CD4-positive, alpha-beta T cell (primary cell): ENCODE measurements at regions of chr10 and their contacts with region 1.

Region 1: GRCh38 chr10:6014241-6014761 is 37.0 kb upstream of the IL15RA start:
- DNase-seq: peak; percentile 32 to 92 (median 60)
- ATAC-seq: peak; percentile 100
- H3K4me3 ChIP-seq: no peak overlapping the region
- H3K4me3 Mint-ChIP-seq: no peak overlapping the region
- H3K27ac ChIP-seq: peak overlapping the region; percentile 68 to 89
- H3K27ac Mint-ChIP-seq: peak overlapping the region; percentile 90
- H3K4me1 ChIP-seq: peaks cover 17% of the 10 kb centered on the region
- H3K4me1 Mint-ChIP-seq: peaks cover 12% of the 10 kb centered on the region
- H3K27me3 ChIP-seq: no peaks in the 10 kb centered on the region
- H3K27me3 Mint-ChIP-seq: no peaks in the 10 kb centered on the region
- CTCF ChIP-seq: peak; percentile 89

Region 2: DNA sequence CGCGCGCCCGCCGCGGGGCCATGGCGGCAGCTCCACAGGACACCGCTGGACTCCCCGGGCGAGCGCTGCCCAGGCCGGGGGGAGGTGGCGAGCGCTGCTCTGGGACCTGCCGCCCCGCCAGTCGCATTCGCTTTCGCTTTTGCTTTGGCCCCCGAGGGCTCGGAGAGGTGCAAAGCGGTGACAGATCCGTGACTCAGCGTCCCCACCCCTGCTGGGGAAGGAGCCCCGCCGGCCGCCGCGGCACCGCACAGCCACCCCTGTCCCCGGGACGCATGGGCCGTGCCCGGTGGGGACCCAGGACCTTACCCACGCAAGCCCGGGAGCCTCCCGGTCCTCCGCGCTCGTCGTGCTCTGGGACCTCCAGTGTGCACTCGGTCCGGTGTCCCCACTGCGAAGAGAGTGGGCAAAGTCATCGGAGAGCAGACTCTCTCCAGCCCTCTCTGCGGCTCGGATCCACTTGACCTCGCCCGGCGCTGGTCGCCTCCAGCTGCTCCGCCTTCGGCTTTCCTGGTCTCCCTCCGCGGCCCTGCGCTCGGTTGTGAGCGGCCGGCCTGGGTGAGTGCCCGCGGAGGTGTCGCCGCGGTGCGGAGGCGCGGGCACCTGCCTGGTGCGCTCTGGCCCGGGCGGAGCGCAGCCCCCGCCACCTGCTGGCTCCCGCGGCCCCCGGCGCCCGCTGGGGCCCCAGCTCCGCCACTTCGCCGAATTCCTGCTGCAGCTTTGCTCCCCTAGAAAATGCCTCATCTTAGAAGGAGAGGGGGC is 36.7 kb before region 1 on chr10 and contains the start of gene IL15RA:
- CTCF ChIA-PET with region 1: interaction called, 3 read pairs
- POLR2A ChIA-PET with region 1: interaction called, 10 read pairs
- intact Hi-C with region 1: no loop called
- DNase-seq: peak; percentile 61 to 92 (median 76)
- ATAC-seq: peak; percentile 76
- H3K4me3 ChIP-seq: peak within 1 kb of the TSS; percentile 91
- H3K4me3 Mint-ChIP-seq: peak within 1 kb of the TSS; percentile 97
- H3K27ac ChIP-seq: peak within 1 kb of the TSS; percentile 55 to 64
- H3K27ac Mint-ChIP-seq: peak within 1 kb of the TSS; percentile 90
- H3K4me1 ChIP-seq: peaks cover 25% of the 10 kb centered on the region
- H3K4me1 Mint-ChIP-seq: peaks cover 21% of the 10 kb centered on the region
- H3K27me3 ChIP-seq: no peaks in the 10 kb centered on the region
- H3K27me3 Mint-ChIP-seq: no peaks in the 10 kb centered on the region
- CTCF ChIP-seq: no peak
- total RNA-seq, gene IL15RA: 4.4 TPM

Region 3: GRCh38 chr10:6045314-6045848 is 31.1 kb after region 1 on chr10:
- CTCF ChIA-PET with region 1: interaction called, 39 read pairs
- POLR2A ChIA-PET with region 1: interaction called, 34 read pairs
- intact Hi-C with region 1: loop called in 1 of 2 experiments (anchors 2 kb)
- DNase-seq: peak in 4 of 14 experiments; percentile 18 to 56 (median 50)
- ATAC-seq: no peak
- H3K4me3 ChIP-seq: peak overlapping the region; percentile 25
- H3K4me3 Mint-ChIP-seq: peak overlapping the region; percentile 74
- H3K27ac ChIP-seq: no peak overlapping the region
- H3K27ac Mint-ChIP-seq: peak overlapping the region; percentile 77
- H3K4me1 ChIP-seq: peaks cover 63% of the 10 kb centered on the region
- H3K4me1 Mint-ChIP-seq: peaks cover 78% of the 10 kb centered on the region
- H3K27me3 ChIP-seq: no peaks in the 10 kb centered on the region
- H3K27me3 Mint-ChIP-seq: no peaks in the 10 kb centered on the region
- CTCF ChIP-seq: no peak

Region 4: GRCh38 chr10:6062101-6062771 is 47.9 kb after region 1 on chr10 and contains the start of gene IL2RA:
- CTCF ChIA-PET with region 1: interaction called, 4 read pairs
- POLR2A ChIA-PET with region 1: interaction called, 4 read pairs
- intact Hi-C with region 1: loop called in 1 of 2 experiments (anchors 1 kb)
- DNase-seq: peak in 12 of 14 experiments; percentile 28 to 90 (median 51)
- ATAC-seq: peak; percentile 87
- H3K4me3 ChIP-seq: peak within 1 kb of the TSS; percentile 63
- H3K4me3 Mint-ChIP-seq: peak within 1 kb of the TSS; percentile 94
- H3K27ac ChIP-seq: peak within 1 kb of the TSS; percentile 23 to 71
- H3K27ac Mint-ChIP-seq: peak within 1 kb of the TSS; percentile 76
- H3K4me1 ChIP-seq: peaks cover 52% of the 10 kb centered on the region
- H3K4me1 Mint-ChIP-seq: peaks cover 69% of the 10 kb centered on the region
- H3K27me3 ChIP-seq: no peaks in the 10 kb centered on the region
- H3K27me3 Mint-ChIP-seq: no peaks in the 10 kb centered on the region
- CTCF ChIP-seq: no peak
- total RNA-seq, gene IL2RA: 4.9 to 5.4 TPM

Region 5: GRCh38 chr10:6401562-6402348 is 387.5 kb after region 1 on chr10:
- CTCF ChIA-PET with region 1: no interaction called
- POLR2A ChIA-PET with region 1: interaction called, 3 read pairs
- intact Hi-C with region 1: loop called (anchors 1 to 2 kb)
- DNase-seq: peak; percentile 35 to 84 (median 49)
- ATAC-seq: peak; percentile 88
- H3K4me3 ChIP-seq: no peak overlapping the region
- H3K4me3 Mint-ChIP-seq: peak overlapping the region; percentile 30
- H3K27ac ChIP-seq: no peak overlapping the region
- H3K27ac Mint-ChIP-seq: peak overlapping the region; percentile 0
- H3K4me1 ChIP-seq: peaks cover 11% of the 10 kb centered on the region
- H3K4me1 Mint-ChIP-seq: peaks cover 29% of the 10 kb centered on the region
- H3K27me3 ChIP-seq: no peaks in the 10 kb centered on the region
- H3K27me3 Mint-ChIP-seq: no peaks in the 10 kb centered on the region
- CTCF ChIP-seq: peak; percentile 83

Region 6: GRCh38 chr10:7133278-7133677 is 1119.0 kb after region 1 on chr10:
- CTCF ChIA-PET with region 1: no interaction called
- POLR2A ChIA-PET with region 1: no interaction called
- intact Hi-C with region 1: no loop called
- DNase-seq: no peak
- ATAC-seq: no peak
- H3K4me3 ChIP-seq: no peak overlapping the region
- H3K4me3 Mint-ChIP-seq: no peak overlapping the region
- H3K27ac ChIP-seq: no peak overlapping the region
- H3K27ac Mint-ChIP-seq: no peak overlapping the region
- H3K4me1 ChIP-seq: no peaks in the 10 kb centered on the region
- H3K4me1 Mint-ChIP-seq: peaks cover 9% of the 10 kb centered on the region
- H3K27me3 ChIP-seq: no peaks in the 10 kb centered on the region
- H3K27me3 Mint-ChIP-seq: peaks cover 11% of the 10 kb centered on the region
- CTCF ChIP-seq: no peak